ENCODE measurements at regions of chr7 and their contacts with region 1.

Region 1: GRCh38 chr7:125061776-125062397 is 132.3 kb upstream of the POT1 start:
- DNase-seq: no peak
- ATAC-seq: peak in 1 of 4 donors; percentile 47
- H3K4me3 ChIP-seq: no peak overlapping the region
- H3K27ac ChIP-seq: no peak overlapping the region
- H3K4me1 ChIP-seq: peaks cover 0 to 6% (median 2%) of the 10 kb centered on the region in 4 donors
- H3K27me3 ChIP-seq: no peaks in the 10 kb centered on the region
- CTCF ChIP-seq: no peak
- POLR2A ChIP-seq: no peak

Region 2: DNA sequence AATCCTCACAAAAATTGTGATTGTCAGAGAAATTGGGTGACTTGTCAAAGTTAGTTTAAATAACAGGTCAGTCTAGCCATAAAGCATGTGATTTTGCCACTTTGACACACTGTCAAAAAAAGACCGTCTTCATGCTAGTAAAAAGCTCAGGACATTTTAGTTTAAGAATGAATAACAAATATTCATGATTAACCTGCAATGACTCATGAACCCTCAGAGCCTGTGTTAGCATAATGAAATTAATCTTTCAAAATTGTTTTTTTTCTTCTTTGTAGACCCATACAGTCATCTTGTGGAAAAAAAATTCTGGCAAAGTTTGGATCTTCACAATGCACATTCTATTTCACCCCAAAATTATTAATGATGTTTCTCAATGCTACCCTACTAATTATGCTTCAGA is 122.9 kb after region 1 on chr7:
- intact Hi-C with region 1: no loop called
- DNase-seq: no peak
- ATAC-seq: no peak
- H3K4me3 ChIP-seq: no peak overlapping the region
- H3K27ac ChIP-seq: no peak overlapping the region
- H3K4me1 ChIP-seq: no peaks in the 10 kb centered on the region
- H3K27me3 ChIP-seq: no peaks in the 10 kb centered on the region
- CTCF ChIP-seq: no peak
- POLR2A ChIP-seq: no peak

Region 3: DNA sequence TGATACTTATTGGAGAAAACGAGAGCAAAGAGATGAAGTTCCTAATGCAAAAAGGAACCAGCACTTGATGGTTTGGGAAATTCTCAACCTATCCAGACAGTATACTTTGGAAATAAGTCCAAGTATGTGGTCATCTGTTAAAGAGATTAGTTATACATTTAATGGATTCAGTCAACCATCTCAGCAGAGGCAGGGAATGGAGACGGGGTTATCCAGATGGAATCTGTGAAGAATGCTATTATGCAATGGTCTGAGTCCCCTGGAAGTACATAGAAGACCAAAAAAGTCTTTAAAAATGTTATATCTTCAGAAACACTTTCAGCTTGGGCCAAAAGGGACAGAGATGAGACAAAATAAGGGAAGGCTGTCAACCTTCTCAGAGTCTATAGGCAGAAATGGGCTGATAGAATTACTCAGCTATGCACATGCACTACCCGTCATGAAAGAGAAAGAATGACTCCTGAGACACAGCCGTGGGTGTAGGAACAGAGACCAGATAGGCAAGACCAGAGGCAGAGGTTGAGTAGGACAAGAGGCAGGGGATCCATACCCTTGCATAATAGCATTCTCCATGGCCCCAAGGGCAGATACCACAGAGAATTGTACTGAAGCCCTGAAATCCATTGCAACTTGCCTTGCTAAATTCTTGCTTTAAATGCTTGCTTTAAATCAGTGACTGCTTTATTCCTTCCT is 606.6 kb after region 1 on chr7:
- intact Hi-C with region 1: loop called in 1 of 2 experiments (anchors 10 kb)
- DNase-seq: no peak
- ATAC-seq: no peak
- H3K4me3 ChIP-seq: no peak overlapping the region
- H3K27ac ChIP-seq: no peak overlapping the region
- H3K4me1 ChIP-seq: peaks cover 0 to 5% (median 0%) of the 10 kb centered on the region in 4 donors
- H3K27me3 ChIP-seq: no peaks in the 10 kb centered on the region
- CTCF ChIP-seq: no peak
- POLR2A ChIP-seq: no peak

Measured in right lobe of liver (tissue), 6 donors.